Calu3 (cell line): ENCODE measurements at regions of chr10 and their contacts with region 1.

Region 1: GRCh38 chr10:69408318-69409175 is 8.2 kb downstream of the TACR2 start:
- DNase-seq: peak; percentile 97
- H3K4me3 Mint-ChIP-seq: peak overlapping the region; percentile 29
- H3K27ac Mint-ChIP-seq: peak overlapping the region; percentile 43
- H3K4me1 Mint-ChIP-seq: peaks cover 21% of the 10 kb centered on the region
- H3K27me3 Mint-ChIP-seq: no peaks in the 10 kb centered on the region
- CTCF ChIP-seq: peak; percentile 93

Region 2: GRCh38 chr10:69340731-69341130 is 67.8 kb before region 1 on chr10:
- CTCF ChIA-PET with region 1: no interaction called
- intact Hi-C with region 1: no loop called
- DNase-seq: no peak
- H3K4me3 Mint-ChIP-seq: no peak overlapping the region
- H3K27ac Mint-ChIP-seq: no peak overlapping the region
- H3K4me1 Mint-ChIP-seq: peaks cover 18% of the 10 kb centered on the region
- H3K27me3 Mint-ChIP-seq: no peaks in the 10 kb centered on the region
- CTCF ChIP-seq: no peak

Region 3: DNA sequence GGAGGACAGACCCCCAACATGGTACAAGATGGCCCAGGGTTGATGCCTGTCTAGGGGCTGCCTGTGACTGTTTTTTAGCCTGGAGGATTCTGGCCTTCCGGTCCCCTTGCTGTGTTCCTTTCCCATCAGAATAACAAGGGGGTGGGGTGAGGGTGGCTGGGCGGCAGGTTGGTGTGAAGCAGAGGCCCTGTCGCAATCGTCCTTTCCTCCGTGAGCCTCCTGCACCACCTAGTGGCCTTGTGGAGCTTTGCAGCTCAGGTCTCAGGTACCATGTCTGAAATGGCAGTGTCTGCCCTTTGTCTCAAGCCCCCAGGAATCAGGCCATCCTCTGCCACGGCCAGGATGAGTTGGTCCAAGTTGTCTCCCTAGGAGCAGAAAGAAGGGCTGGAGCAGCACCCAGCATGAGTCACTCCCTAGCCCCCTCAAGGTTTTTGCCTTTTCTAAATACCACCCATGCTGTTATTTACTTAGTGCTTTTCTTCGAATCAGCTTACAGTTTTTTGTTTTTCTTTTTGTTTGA is 16.0 kb before region 1 on chr10:
- CTCF ChIA-PET with region 1: interaction called, 10 read pairs
- intact Hi-C with region 1: no loop called
- DNase-seq: peak; percentile 90
- H3K4me3 Mint-ChIP-seq: no peak overlapping the region
- H3K27ac Mint-ChIP-seq: no peak overlapping the region
- H3K4me1 Mint-ChIP-seq: peaks cover 16% of the 10 kb centered on the region
- H3K27me3 Mint-ChIP-seq: no peaks in the 10 kb centered on the region
- CTCF ChIP-seq: peak; percentile 97

Region 4: DNA sequence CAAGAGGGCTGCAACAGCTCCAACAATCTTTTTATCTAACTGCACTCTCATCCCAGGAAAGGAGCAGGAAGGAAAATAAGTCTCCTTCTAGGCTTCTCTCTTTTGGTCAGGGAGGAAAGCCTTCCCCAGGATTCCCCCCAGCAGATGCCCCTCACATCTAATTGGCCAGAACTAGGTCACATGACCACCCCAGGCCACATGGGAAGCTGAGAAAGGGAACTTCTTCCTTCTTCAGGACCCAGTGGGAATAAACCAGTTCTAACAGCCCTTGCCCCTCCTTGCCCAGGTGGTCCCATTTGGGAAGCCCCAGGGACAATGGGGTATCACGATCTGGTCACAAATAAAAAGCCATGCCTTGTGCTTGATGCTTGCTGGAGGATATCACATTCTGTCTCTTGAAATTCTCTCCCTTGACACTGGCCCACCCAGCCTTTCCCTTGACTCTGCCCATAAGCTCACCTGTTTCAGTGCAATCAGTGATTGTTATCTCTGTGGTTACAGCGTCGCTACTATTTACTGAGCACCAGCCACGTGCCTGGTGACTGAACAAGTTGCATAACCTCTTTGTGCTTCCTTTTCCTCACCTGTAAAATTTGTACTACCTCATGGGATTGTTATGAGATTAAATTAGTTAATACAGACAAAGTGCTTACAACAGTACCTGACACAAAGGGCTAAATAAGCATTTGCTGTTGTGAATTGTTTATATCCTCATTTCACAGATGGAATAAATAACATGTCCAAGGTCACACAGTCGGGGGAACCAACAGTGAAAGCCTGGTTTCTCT is 17.2 kb after region 1 on chr10:
- CTCF ChIA-PET with region 1: interaction called, 42 read pairs
- intact Hi-C with region 1: loop called (anchors 2 kb)
- DNase-seq: peak; percentile 75
- H3K4me3 Mint-ChIP-seq: no peak overlapping the region
- H3K27ac Mint-ChIP-seq: peak overlapping the region; percentile 82
- H3K4me1 Mint-ChIP-seq: peaks cover 50% of the 10 kb centered on the region
- H3K27me3 Mint-ChIP-seq: no peaks in the 10 kb centered on the region
- CTCF ChIP-seq: no peak

Region 5: DNA sequence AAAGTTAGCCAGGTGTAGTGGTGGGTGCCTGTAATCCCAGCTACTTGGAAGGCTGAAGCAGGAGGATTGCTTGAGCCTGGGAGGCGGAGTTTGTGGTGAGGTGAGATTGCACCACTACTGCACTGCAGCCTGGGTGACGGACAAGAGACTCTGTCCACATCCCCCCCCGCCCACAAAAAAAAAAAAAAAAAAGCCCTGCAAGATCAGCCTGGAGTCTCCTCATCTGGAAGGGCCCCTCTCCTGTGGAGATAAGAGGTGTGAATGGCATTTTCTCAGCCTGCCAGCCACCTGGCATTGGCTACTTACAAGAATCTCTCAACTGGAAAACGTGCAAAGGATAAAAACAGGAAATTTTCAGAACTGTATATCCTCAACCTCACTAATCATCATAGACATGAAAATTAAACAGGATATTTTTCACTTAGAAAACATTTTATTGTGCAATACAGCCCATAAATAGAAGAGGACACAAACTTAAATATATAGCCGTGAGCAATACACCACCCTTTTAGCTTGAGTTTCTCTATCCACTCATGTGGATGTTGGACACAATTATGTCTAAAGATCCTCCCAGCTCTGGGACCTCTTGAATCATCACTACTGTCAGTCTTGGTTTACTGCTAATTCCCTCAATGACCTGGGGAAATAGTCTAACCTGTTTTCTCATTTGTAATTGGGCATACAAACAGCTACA is 31.4 kb after region 1 on chr10:
- CTCF ChIA-PET with region 1: interaction called, 16 read pairs
- intact Hi-C with region 1: no loop called
- DNase-seq: peak; percentile 76
- H3K4me3 Mint-ChIP-seq: no peak overlapping the region
- H3K27ac Mint-ChIP-seq: peak overlapping the region; percentile 80
- H3K4me1 Mint-ChIP-seq: peaks cover 57% of the 10 kb centered on the region
- H3K27me3 Mint-ChIP-seq: no peaks in the 10 kb centered on the region
- CTCF ChIP-seq: no peak

Region 6: DNA sequence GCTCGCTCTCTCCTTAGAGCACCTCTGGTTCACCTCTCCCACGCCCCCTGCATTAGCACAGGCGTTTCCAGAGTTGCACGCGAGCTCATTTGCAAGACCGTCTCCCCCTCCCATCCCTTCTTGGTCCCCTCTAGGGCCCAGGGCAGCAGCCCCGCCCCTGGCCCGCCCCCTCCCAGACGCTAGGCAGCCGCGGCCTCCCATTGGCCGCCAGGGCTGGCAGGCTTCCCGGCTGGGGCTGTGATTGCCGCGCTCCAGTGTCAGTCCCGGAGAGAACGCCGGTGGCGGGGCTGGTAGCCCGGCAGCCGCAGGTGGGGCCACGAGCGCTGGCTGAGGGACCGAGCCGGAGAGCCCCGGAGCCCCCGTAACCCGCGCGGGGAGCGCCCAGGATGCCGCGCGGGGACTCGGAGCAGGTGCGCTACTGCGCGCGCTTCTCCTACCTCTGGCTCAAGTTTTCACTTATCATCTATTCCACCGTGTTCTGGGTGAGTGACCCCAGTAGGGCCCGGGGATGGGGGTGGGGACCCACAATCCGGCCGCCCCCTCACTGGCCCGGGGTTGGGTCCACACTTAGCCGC is 42.7 kb after region 1 on chr10 and contains the start of gene TSPAN15:
- CTCF ChIA-PET with region 1: interaction called, 27 read pairs
- intact Hi-C with region 1: no loop called
- DNase-seq: peak; percentile 98
- H3K4me3 Mint-ChIP-seq: peak within 1 kb of the TSS; percentile 97
- H3K27ac Mint-ChIP-seq: peak within 1 kb of the TSS; percentile 78
- H3K4me1 Mint-ChIP-seq: peaks cover 66% of the 10 kb centered on the region
- H3K27me3 Mint-ChIP-seq: no peaks in the 10 kb centered on the region
- CTCF ChIP-seq: no peak
- total RNA-seq, gene TSPAN15: 137 and 165 TPM in 2 replicates

Region 7: DNA sequence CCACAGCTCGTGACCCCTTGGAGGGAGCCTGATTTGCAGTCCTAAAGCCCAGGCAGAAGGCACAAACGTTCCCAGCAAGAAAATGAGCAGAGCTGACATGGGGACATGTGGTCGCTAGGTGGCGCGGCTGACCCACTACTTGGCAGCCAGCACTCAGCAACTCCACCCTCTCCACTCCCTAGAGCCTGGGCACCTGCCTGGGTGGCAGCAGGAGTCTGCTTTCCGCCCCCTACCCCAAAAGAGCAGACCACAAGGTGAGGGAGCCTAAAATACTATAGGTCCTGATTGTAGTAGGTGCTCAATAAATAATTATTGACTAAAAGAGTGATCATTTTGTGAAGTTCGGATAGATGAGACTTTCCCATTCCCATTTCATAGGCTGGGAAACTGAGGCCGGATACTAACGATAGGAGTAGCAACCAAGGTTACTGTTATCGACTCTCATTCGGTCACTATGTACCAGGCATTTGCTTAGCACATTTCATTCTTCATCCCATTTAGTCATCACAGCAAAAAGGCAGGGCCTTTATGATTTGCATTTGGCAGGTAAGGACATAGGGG is 107.2 kb after region 1 on chr10:
- CTCF ChIA-PET with region 1: interaction called, 17 read pairs
- intact Hi-C with region 1: loop called (anchors 5 kb)
- DNase-seq: peak; percentile 86
- H3K4me3 Mint-ChIP-seq: no peak overlapping the region
- H3K27ac Mint-ChIP-seq: peak overlapping the region; percentile 31
- H3K4me1 Mint-ChIP-seq: peaks cover 10% of the 10 kb centered on the region
- H3K27me3 Mint-ChIP-seq: no peaks in the 10 kb centered on the region
- CTCF ChIP-seq: peak; percentile 89

Region 8: DNA sequence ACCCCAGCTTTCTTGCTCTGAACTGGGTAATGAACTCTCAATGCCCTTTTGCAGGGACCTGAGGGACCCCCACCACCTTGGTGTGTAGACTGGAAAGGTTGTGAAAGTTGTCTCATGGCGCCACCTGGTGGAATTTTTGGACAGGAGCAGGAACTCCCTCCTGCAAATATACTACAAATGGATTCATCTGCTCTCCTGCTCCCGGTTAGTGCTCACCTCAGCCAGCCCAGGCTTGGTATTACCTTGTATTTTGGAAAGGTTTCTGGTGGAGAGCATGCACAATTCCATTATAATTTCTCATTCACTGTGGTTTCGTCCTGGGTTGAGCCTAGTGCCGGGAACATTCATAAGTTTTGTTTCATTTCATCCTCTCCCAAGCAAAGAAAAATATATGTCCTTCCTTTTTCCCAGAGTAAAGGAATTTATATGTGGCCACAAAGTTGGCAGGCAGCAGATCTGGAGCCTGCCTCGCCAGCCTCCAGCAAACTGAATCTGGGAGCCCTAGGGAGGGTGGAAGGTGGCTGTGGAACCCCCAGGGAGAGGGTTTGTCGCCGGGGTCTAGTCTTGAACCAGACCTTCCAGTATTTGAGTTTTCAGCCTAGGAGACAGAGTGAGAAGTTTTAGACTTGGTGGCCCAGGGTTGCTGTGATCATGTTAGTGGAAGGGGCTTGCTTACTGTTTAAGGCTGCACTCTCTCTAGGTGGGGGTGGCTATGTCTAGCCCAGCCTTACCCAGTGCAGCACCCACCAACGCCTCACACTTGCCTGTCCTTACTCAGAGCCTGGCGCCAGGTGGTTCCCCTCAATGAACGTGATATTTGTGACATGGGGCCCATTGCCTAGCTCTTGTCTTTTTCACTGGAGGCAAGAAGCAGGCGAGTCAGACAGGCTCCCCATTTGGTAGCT is 231.0 kb after region 1 on chr10:
- CTCF ChIA-PET with region 1: interaction called, 44 read pairs
- intact Hi-C with region 1: loop called (anchors 1 kb)
- DNase-seq: peak; percentile 74
- H3K4me3 Mint-ChIP-seq: no peak overlapping the region
- H3K27ac Mint-ChIP-seq: no peak overlapping the region
- H3K4me1 Mint-ChIP-seq: no peaks in the 10 kb centered on the region
- H3K27me3 Mint-ChIP-seq: peaks cover 18% of the 10 kb centered on the region
- CTCF ChIP-seq: peak; percentile 97